ENCODE measurements at regions of chr5 and their contacts with region 1.

Region 1: DNA sequence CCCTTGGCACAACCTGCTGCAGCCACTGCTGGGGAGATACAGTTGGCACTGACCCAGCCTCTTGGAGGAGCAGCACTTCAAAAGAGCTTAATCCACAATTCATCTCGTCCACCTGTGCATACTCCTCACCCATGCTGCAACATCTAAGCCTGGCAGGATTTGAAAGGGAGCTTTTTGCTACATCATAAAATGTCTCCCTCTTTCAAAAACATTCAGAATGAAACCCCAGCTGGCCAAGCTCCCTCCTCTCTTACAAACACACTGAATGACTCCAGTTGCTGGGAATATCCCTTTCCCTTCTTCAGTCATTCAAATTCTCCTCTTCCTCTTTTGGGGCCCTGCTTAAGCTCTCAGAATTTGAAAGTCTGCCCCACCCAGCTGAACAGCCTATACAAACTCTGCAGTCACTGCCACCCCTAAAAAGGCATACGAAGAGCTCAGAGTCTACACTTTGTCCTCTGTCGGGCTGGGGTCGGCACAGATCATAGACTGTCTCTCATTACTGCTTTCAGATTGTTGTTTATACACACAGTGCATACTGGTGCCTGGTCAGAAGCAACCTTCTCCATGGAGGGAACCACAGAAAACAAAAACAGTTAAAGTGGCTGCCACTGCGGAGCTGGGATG is 8.8 kb upstream of the C5orf15 start:
- DNase-seq: no peak
- H3K4me3 Mint-ChIP-seq: no peak overlapping the region
- H3K27ac Mint-ChIP-seq: no peak overlapping the region
- H3K4me1 Mint-ChIP-seq: peaks cover 10% of the 10 kb centered on the region
- H3K27me3 Mint-ChIP-seq: no peaks in the 10 kb centered on the region

Region 2: GRCh38 chr5:133907075-133907474 is 70.2 kb before region 1 on chr5:
- CTCF ChIA-PET with region 1: no interaction called
- DNase-seq: no peak
- H3K4me3 Mint-ChIP-seq: no peak overlapping the region
- H3K27ac Mint-ChIP-seq: no peak overlapping the region
- H3K4me1 Mint-ChIP-seq: no peaks in the 10 kb centered on the region
- H3K27me3 Mint-ChIP-seq: peaks cover 4% of the 10 kb centered on the region

Region 3: DNA sequence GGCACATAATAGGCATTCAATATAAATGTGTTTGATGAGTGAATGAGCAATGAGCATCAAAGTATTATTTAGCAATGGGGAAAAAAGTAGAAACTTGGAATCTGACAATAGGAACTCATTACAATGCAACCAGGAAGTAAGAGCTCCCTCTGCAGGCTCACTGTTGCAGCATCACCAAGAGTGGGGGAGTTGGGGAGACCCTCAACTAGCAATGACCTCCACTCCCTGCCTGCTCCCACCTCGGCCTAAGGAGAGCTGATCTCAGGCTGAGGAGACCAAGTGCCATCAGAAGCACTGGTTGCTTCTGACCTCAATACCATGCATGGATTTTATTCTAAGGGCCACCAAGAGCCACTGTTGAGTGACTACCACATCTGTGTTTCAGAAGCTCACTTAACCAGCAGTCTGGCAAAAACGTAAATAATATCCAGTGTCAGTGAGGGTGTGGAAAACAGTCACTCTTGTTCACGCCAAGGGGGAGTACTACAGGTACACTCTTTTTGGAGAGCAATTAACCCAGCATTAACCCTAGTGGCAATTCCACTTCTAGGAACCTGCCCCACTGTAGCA is 19.5 kb after region 1 on chr5:
- CTCF ChIA-PET with region 1: interaction called, 107 read pairs
- DNase-seq: peak; percentile 35
- H3K4me3 Mint-ChIP-seq: no peak overlapping the region
- H3K27ac Mint-ChIP-seq: peak overlapping the region; percentile 37
- H3K4me1 Mint-ChIP-seq: peaks cover 57% of the 10 kb centered on the region
- H3K27me3 Mint-ChIP-seq: no peaks in the 10 kb centered on the region